HEK293T (cell line): ENCODE measurements at regions of chr12 and their contacts with region 1.

Region 1: DNA sequence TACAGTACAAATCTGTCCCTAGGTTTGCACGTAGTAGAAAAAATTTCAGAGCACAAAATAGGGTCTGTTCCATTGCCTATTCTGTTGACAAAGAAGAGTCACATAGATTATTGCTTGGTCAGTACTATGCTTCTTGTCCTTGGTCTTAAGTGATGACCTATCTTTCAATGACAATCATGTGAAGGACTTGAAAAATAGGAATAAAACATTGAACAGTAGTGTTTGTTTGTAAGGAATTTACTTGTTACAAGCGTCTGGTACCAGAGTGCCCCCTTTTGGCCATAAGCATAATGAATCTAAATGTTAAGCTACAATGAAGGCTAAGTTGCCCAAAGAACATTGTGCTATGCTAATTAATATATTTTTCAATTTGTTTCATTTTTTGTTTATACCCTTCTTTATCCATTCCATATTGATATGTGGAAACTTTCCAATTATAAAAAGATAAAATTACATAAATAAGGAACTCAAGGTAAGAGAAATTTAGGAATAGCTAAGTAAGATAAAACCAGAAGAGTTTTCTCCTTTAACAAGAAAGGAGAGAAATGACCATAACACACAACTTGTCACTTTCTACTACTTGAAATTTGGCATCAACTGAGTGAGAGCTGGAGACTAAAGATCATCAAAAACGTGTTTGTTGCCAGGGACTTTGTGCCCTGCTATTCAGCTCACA is 204.7 kb downstream of the EPS8 start:
- DNase-seq: peak; percentile 23

Region 2: DNA sequence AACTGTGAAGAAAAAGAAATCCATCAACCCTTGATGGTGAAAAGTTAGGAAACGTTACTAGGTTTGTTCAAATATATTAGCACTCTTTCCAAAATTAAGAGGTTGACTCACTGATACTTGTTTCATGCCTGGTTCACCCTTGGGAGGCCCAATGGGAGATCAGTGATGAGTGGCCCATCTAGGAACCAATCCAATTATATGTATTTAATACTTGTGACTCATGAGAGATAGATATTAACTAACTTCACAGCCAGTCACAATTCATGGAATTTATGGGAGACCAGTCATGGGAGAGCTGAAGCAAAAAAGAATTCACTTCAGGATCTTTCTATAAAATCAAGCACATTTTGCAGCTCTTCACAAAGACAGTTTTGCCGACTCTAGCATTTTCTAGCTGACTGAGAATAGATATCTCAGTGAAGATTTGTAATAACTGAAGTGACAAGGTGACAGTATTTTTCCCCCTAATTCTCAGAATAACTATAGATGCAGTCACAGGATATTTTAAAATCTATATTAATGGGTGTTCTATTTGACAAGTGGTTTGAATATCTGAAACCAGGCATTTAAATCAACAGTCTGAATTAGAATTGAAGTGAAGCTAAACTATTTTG is 25.5 kb before region 1 on chr12:
- CTCF ChIA-PET with region 1: interaction called, 10 read pairs
- POLR2A ChIA-PET with region 1: no interaction called
- DNase-seq: no peak